GM10248 (cell line): ENCODE measurements at regions of chr2 and their contacts with region 1.

Region 1: DNA sequence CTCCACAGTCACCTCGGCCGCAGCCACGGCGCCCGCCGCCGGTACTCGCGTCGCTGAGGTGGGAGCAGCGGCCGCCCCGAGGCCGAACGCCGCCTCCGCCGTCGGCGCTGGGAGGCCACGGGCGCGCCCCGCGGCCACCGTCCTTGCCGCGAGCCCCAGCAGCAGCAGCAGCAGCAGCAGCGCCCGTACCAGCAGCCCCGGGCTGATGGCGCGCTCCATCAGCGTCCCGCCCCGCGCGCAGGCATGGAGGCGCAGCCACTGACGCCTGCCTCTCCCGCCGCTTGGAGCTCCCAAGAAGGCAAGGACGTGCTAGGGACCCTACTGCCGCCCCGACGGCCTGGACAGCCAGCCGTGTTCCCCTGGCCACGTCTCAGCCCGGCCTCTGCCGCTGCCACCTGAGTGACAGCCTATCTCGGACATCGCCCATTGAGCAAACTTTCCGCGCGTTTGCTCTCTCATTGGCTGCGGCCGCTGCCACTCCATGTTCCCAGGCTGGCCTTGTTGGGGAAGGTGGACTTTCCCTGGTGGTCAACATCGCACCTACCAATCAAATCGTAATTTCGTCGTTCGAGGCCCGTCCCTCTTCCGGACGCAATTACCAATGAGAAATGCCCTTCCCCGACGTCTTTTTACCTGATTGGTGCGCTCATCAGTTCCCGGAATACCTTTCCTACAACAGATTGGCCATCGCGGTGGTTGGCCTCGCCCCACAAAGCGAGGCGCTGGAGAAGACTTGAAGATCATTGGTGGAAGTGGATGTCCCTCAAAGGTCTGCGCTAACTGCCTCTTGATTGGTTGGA is at the start of gene EIF2AK3:
- DNase-seq: peak; percentile 93
- CTCF ChIP-seq: no peak

Region 2: GRCh38 chr2:88500695-88501094 is 126.6 kb before region 1 on chr2:
- CTCF ChIA-PET with region 1: no interaction called
- POLR2A ChIA-PET with region 1: no interaction called
- DNase-seq: no peak
- CTCF ChIP-seq: no peak

Region 3: GRCh38 chr2:88600038-88600465 is 27.2 kb before region 1 on chr2:
- CTCF ChIA-PET with region 1: interaction called, 3 read pairs
- POLR2A ChIA-PET with region 1: interaction called, 13 read pairs
- DNase-seq: peak; percentile 73
- CTCF ChIP-seq: no peak